ENCODE measurements at regions of chr14 and their contacts with region 1.

Region 1: DNA sequence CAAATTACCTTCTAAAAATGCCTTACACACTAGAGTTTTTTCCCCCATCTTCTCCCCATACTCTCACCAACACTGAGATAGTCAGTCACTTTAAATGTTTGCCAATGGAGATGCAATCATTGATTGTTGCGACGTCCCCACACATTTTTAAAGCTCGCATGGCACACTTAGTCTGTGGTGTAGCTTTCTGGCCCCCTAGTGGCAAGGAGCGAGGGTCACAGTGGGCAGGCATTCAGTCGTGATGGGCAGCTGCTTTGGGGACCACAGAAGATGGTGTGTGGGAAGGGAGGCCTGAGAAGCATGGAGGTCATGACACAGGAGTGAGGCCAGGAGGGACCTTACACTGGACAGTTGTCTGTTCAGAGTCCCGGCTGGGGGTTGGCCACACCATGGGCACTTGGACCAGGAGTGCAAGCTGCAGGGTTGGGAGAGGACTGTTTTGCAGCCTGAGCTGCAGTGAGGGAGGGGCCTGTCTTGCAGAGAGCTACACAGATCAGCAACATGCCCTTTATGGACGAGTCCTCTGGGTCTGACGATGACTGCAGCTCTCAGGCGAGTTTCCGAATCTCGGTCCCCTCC is 28.7 kb downstream of the PIGH start:
- DNase-seq: peak; percentile 81
- CTCF ChIP-seq: peak; percentile 97

Region 2: GRCh38 chr14:67514650-67515385 is 56.5 kb before region 1 on chr14:
- CTCF ChIA-PET with region 1: interaction called, 20 read pairs
- POLR2A ChIA-PET with region 1: no interaction called
- DNase-seq: peak; percentile 62
- CTCF ChIP-seq: no peak

Region 3: GRCh38 chr14:67532998-67533753 is 38.2 kb before region 1 on chr14 and contains the start of gene PLEKHH1:
- CTCF ChIA-PET with region 1: interaction called, 38 read pairs
- POLR2A ChIA-PET with region 1: no interaction called
- DNase-seq: peak; percentile 75
- CTCF ChIP-seq: no peak

Region 4: GRCh38 chr14:67666750-67667449 is 95.5 kb after region 1 on chr14:
- CTCF ChIA-PET with region 1: interaction called, 203 read pairs
- POLR2A ChIA-PET with region 1: no interaction called
- DNase-seq: peak; percentile 69
- CTCF ChIP-seq: peak; percentile 67

Region 5: DNA sequence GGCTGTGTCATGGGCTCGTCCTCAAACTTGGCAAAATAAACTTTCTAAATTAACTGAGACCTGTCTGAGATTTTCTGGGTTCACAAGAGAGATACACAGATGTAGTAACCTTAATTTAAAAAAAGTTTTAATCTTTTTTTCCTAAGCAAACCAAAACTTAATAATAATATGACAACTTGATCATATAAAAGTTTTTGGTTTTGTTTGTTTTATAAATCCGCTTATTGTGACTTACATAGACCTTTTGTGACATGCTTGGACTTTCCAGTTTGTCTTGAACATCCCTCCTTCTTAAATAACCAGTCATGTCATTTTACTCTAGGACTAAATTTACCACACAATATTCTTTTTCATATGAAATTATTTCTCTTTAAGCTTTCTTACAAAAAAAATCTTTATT is 138.8 kb after region 1 on chr14:
- CTCF ChIA-PET with region 1: interaction called, 313 read pairs
- POLR2A ChIA-PET with region 1: no interaction called
- DNase-seq: no peak
- CTCF ChIP-seq: no peak

Region 6: DNA sequence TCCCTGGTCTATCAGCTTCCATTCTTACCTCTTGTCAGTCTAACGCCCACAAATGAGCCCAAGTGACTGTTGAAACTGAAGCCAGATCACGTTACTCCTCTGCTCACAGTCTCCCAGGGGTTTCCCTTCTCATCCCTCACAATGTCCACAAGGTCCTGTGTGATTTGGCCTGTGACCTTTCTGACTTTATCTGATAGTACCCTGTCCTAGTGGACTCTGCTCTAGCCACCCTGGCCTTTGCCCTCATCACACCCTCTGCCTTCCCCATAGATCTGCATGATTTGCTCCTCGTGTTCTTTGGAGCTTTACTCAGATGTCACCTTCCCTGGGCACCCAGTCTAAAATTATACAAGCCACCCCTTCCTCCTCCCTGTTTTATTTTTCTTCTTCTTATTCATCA is 185.8 kb after region 1 on chr14:
- CTCF ChIA-PET with region 1: no interaction called
- POLR2A ChIA-PET with region 1: no interaction called
- DNase-seq: no peak
- CTCF ChIP-seq: no peak